KBM-7 (cell line): ENCODE measurements at regions of chrX and their contacts with region 1.

Region 1: GRCh38 chrX:69538321-69538876 is 34.3 kb downstream of the NALF2 start:
- DNase-seq: peak; percentile 69

Region 2: GRCh38 chrX:69014200-69014599 is 524.2 kb before region 1 on chrX:
- in situ Hi-C with region 1: no loop called
- DNase-seq: no peak

Region 3: GRCh38 chrX:69027181-69028005 is 511.0 kb before region 1 on chrX:
- in situ Hi-C with region 1: no loop called
- DNase-seq: no peak

Region 4: DNA sequence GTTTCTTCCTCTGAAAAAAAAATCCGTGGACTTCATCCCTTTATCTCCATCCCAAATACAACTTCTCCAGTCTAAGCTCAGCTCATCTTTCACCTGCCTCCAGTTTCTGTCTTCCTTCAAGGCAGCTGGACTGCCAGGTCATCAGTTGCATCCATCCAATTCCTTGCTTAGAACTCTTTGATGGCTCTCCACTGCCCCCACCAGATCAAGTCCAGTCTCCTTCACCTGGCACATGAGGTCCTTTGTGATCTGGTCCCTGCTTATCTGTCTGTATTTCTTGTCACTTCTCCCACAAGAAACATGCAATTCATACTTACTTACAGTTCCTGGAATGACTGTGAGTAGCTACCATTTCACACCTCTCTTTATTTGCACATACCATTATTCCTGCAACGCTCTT is 557.7 kb after region 1 on chrX:
- in situ Hi-C with region 1: loop called (anchors 25 kb)
- DNase-seq: no peak